Activated B cell treated with CpG ODN at 0.5 μM for 24 hours (primary cell): ENCODE measurements at regions of chr17 and their contacts with region 1.

Region 1: DNA sequence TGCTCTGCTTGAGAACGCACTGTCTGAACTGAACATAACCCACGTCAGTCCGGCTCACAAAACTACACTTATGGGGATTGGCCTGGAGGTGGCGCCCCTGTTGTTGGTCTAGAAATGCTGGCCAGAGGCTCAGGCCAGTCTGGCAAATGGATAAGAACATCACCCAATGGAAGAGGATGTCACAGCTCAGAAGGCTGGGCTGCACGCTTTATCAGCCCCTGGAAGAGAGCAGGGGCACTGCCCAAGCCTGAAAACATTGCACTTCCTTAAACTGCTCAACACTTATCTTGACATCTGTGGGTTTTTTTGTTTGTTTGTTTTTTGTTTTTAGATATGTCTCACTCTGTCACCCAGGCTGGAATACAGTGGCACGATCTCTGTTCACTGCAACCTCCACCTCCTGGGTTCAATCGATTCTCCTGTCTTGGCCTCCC is 24.8 kb upstream of the BPTF start:
- DNase-seq: peak; percentile 68
- ATAC-seq: peak; percentile 94
- H3K4me3 Mint-ChIP-seq: peak overlapping the region; percentile 11
- H3K27ac Mint-ChIP-seq: peak overlapping the region; percentile 19
- H3K4me1 Mint-ChIP-seq: peaks cover 17% of the 10 kb centered on the region
- H3K27me3 Mint-ChIP-seq: no peaks in the 10 kb centered on the region
- CTCF ChIP-seq: no peak

Region 2: GRCh38 chr17:67862614-67863217 is 62.2 kb after region 1 on chr17:
- CTCF ChIA-PET with region 1: interaction called, 6 read pairs
- POLR2A ChIA-PET with region 1: interaction called, 6 read pairs
- intact Hi-C with region 1: loop called (anchors 2 kb)
- DNase-seq: no peak
- ATAC-seq: no peak
- H3K4me3 Mint-ChIP-seq: no peak overlapping the region
- H3K27ac Mint-ChIP-seq: peak overlapping the region; percentile 52
- H3K4me1 Mint-ChIP-seq: peaks cover 56% of the 10 kb centered on the region
- H3K27me3 Mint-ChIP-seq: no peaks in the 10 kb centered on the region
- CTCF ChIP-seq: no peak

Region 3: DNA sequence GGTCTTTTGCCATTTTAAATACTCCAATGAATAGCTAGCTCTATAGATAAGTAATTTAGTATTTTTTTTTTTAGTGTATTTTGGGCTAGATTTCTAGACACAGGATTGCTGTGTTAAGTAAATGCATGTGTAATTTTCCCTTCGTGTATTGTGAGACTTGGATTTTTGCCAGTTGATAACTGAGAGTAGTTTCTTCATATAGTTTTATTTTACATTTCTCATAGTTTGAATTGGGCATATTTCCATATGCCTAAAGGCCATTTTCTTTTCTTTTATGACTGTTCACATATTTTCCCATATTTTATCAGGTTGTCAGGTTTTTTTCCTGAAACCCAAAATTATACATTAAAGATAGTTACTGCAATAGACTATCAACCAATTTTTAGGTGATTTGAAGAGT is 84.2 kb after region 1 on chr17:
- CTCF ChIA-PET with region 1: no interaction called
- POLR2A ChIA-PET with region 1: no interaction called
- intact Hi-C with region 1: loop called (anchors 5 kb)
- DNase-seq: no peak
- ATAC-seq: no peak
- H3K4me3 Mint-ChIP-seq: no peak overlapping the region
- H3K27ac Mint-ChIP-seq: no peak overlapping the region
- H3K4me1 Mint-ChIP-seq: no peaks in the 10 kb centered on the region
- H3K27me3 Mint-ChIP-seq: no peaks in the 10 kb centered on the region
- CTCF ChIP-seq: no peak

Region 4: GRCh38 chr17:67959288-67959900 is 158.9 kb after region 1 on chr17:
- CTCF ChIA-PET with region 1: no interaction called
- POLR2A ChIA-PET with region 1: no interaction called
- intact Hi-C with region 1: no loop called
- DNase-seq: no peak
- ATAC-seq: no peak
- H3K4me3 Mint-ChIP-seq: no peak overlapping the region
- H3K27ac Mint-ChIP-seq: no peak overlapping the region
- H3K4me1 Mint-ChIP-seq: peaks cover 3% of the 10 kb centered on the region
- H3K27me3 Mint-ChIP-seq: no peaks in the 10 kb centered on the region
- CTCF ChIP-seq: no peak